ENCODE measurements at regions of chr12 and their contacts with region 1.

Region 1: GRCh38 chr12:50111693-50112455 is at the start of gene COX14:
- DNase-seq: peak; percentile 98 to 100 (median 99)
- ATAC-seq: peak; percentile 82
- H3K4me3 ChIP-seq: peak within 1 kb of the TSS; percentile 88 to 98
- H3K4me3 Mint-ChIP-seq: peak within 1 kb of the TSS; percentile 99
- H3K27ac ChIP-seq: peak within 1 kb of the TSS; percentile 97 to 98
- H3K27ac Mint-ChIP-seq: peak within 1 kb of the TSS; percentile 95
- H3K4me1 ChIP-seq: peaks cover 36% of the 10 kb centered on the region
- H3K4me1 Mint-ChIP-seq: peaks cover 35% of the 10 kb centered on the region
- H3K27me3 ChIP-seq: no peaks in the 10 kb centered on the region
- H3K27me3 Mint-ChIP-seq: no peaks in the 10 kb centered on the region
- CTCF ChIP-seq: peak; percentile 97
- total RNA-seq, gene COX14: 42.2 to 43.3 TPM

Region 2: GRCh38 chr12:49855005-49855404 is 256.9 kb before region 1 on chr12:
- CTCF ChIA-PET with region 1: no interaction called
- POLR2A ChIA-PET with region 1: no interaction called
- intact Hi-C with region 1: no loop called
- DNase-seq: no peak
- ATAC-seq: no peak
- H3K4me3 ChIP-seq: no peak overlapping the region
- H3K4me3 Mint-ChIP-seq: no peak overlapping the region
- H3K27ac ChIP-seq: no peak overlapping the region
- H3K27ac Mint-ChIP-seq: no peak overlapping the region
- H3K4me1 ChIP-seq: no peaks in the 10 kb centered on the region
- H3K4me1 Mint-ChIP-seq: no peaks in the 10 kb centered on the region
- H3K27me3 ChIP-seq: no peaks in the 10 kb centered on the region
- H3K27me3 Mint-ChIP-seq: peaks cover 11% of the 10 kb centered on the region
- CTCF ChIP-seq: no peak

Region 3: GRCh38 chr12:50025187-50026059 is 86.5 kb before region 1 on chr12 and contains the start of gene RACGAP1:
- CTCF ChIA-PET with region 1: interaction called, 4 read pairs
- POLR2A ChIA-PET with region 1: interaction called, 9 read pairs
- intact Hi-C with region 1: loop called (anchors 1 kb)
- DNase-seq: peak; percentile 88 to 99 (median 94)
- ATAC-seq: peak; percentile 97
- H3K4me3 ChIP-seq: peak within 1 kb of the TSS; percentile 62 to 78
- H3K4me3 Mint-ChIP-seq: peak within 1 kb of the TSS; percentile 98
- H3K27ac ChIP-seq: peak within 1 kb of the TSS; percentile 38 to 63
- H3K27ac Mint-ChIP-seq: peak within 1 kb of the TSS; percentile 86
- H3K4me1 ChIP-seq: no peaks in the 10 kb centered on the region
- H3K4me1 Mint-ChIP-seq: peaks cover 16% of the 10 kb centered on the region
- H3K27me3 ChIP-seq: no peaks in the 10 kb centered on the region
- H3K27me3 Mint-ChIP-seq: no peaks in the 10 kb centered on the region
- CTCF ChIP-seq: no peak
- total RNA-seq, gene RACGAP1: 2.2 to 2.8 TPM

Region 4: GRCh38 chr12:50127546-50127945 is 15.7 kb after region 1 on chr12:
- CTCF ChIA-PET with region 1: interaction called, 20 read pairs
- POLR2A ChIA-PET with region 1: interaction called, 12 read pairs
- intact Hi-C with region 1: no loop called
- DNase-seq: no peak
- ATAC-seq: no peak
- H3K4me3 ChIP-seq: no peak overlapping the region
- H3K4me3 Mint-ChIP-seq: no peak overlapping the region
- H3K27ac ChIP-seq: no peak overlapping the region
- H3K27ac Mint-ChIP-seq: no peak overlapping the region
- H3K4me1 ChIP-seq: peaks cover 11% of the 10 kb centered on the region
- H3K4me1 Mint-ChIP-seq: peaks cover 34% of the 10 kb centered on the region
- H3K27me3 ChIP-seq: no peaks in the 10 kb centered on the region
- H3K27me3 Mint-ChIP-seq: no peaks in the 10 kb centered on the region
- CTCF ChIP-seq: no peak

Region 5: GRCh38 chr12:50167041-50167828 is 55.4 kb after region 1 on chr12 and contains the start of gene CERS5:
- CTCF ChIA-PET with region 1: interaction called, 29 read pairs
- POLR2A ChIA-PET with region 1: interaction called, 45 read pairs
- intact Hi-C with region 1: loop called (anchors 1 kb)
- DNase-seq: peak; percentile 92 to 98 (median 96)
- ATAC-seq: peak; percentile 95
- H3K4me3 ChIP-seq: peak within 1 kb of the TSS; percentile 85 to 90
- H3K4me3 Mint-ChIP-seq: peak within 1 kb of the TSS; percentile 92
- H3K27ac ChIP-seq: peak within 1 kb of the TSS; percentile 88 to 93
- H3K27ac Mint-ChIP-seq: peak within 1 kb of the TSS; percentile 95
- H3K4me1 ChIP-seq: peaks cover 15% of the 10 kb centered on the region
- H3K4me1 Mint-ChIP-seq: peaks cover 29% of the 10 kb centered on the region
- H3K27me3 ChIP-seq: no peaks in the 10 kb centered on the region
- H3K27me3 Mint-ChIP-seq: no peaks in the 10 kb centered on the region
- CTCF ChIP-seq: no peak
- total RNA-seq, gene CERS5: 45.2 to 46.2 TPM

Region 6: DNA sequence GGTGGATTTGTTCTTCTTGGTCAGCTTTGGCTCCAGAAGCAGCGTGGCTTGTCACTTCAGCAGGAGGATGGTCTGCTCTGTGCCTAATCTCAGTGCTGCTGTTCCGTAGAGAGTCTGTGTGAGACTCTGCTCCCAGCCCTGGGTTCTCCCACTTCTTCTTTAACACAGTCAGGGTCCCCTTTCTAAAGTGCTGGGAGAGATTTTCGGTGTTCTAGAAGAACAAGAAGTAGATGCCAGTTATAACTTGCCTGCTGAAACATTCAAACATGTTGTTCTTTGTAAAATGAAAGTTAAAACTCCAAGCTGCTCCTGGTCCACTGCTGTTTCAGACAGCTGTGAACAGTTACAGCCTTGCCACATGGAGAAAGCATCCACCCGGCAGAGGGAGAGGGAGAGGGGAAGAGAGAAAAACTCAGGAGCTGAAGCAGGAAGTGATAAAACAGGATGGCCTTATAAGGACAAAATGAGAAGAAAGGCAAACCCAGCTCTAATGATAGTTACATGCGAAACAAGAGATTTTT is 110.5 kb after region 1 on chr12:
- CTCF ChIA-PET with region 1: interaction called, 4 read pairs
- POLR2A ChIA-PET with region 1: interaction called, 12 read pairs
- intact Hi-C with region 1: no loop called
- DNase-seq: peak in 3 of 9 experiments; percentile 47 to 67 (median 56)
- ATAC-seq: peak; percentile 56
- H3K4me3 ChIP-seq: peak overlapping the region; percentile 56 to 68
- H3K4me3 Mint-ChIP-seq: no peak overlapping the region
- H3K27ac ChIP-seq: peak overlapping the region; percentile 46 to 84
- H3K27ac Mint-ChIP-seq: no peak overlapping the region
- H3K4me1 ChIP-seq: peaks cover 27% of the 10 kb centered on the region
- H3K4me1 Mint-ChIP-seq: peaks cover 33% of the 10 kb centered on the region
- H3K27me3 ChIP-seq: no peaks in the 10 kb centered on the region
- H3K27me3 Mint-ChIP-seq: no peaks in the 10 kb centered on the region
- CTCF ChIP-seq: no peak

Measured in CD8-positive, alpha-beta T cell (primary cell).